ENCODE measurements at regions of chr3 and their contacts with region 1.

Region 1: GRCh38 chr3:45140141-45140784 is 5.9 kb downstream of the CDCP1 start:
- DNase-seq: no peak
- ATAC-seq: no peak
- H3K4me3 ChIP-seq: no peak overlapping the region
- H3K27ac ChIP-seq: peak overlapping the region; percentile 81; the same call in 2 of the 3 replicates
- H3K4me1 ChIP-seq: peaks cover 22 to 67% of the 10 kb centered on the region in 2 experiments
- H3K27me3 ChIP-seq: no peaks in the 10 kb centered on the region
- CTCF ChIP-seq: no peak
- EP300 ChIP-seq: no peak
- POLR2A ChIP-seq: no peak
- RAD21 ChIP-seq: no peak

Region 2: DNA sequence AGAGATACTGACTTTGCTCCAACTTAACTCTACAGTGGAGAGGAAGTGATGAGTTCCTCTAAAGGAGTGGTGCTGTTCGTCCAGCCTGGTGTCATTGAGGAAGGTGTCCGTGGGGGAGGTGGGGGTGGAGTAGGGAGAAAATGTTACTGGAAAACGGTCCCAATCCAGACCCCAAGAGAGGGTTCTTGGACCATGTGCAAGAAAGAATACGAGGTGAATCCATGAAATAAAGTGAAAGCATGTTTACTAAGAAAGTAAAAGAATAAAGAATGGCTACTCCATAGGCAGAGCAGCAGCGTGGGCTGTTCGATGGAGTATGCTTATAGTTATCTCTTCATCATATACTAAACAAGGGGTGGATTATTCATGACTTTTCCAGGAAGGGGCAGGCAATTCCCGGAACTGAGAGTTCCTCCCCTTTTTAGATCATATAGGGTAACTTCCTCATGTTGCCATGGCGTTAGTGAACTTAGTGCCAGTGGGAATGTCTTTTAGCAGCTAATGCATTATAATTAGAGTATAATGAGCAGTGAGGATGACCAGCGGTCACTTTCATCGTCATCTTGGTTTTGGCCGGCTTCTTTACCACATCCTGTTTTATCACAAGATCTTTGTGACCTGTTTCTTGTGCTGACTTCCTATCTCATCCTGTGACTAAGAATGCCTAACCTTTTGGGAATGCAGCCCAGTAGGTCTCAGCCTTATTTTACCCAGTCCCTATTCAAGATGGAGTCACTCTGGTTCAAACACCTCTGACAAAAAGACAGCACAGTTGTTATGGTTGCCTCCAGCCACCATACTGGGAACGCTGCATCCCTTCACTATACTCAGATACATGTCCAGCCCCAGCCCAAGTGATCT is 75.5 kb before region 1 on chr3:
- CTCF ChIA-PET with region 1: no interaction called
- POLR2A ChIA-PET with region 1: interaction called, 3 read pairs
- in situ Hi-C with region 1: no loop called
- intact Hi-C with region 1: loop called (anchors 2 kb)
- DNase-seq: peak; percentile 58 to 99 (median 70)
- ATAC-seq: peak; percentile 73
- H3K4me3 ChIP-seq: peak overlapping the region; percentile 12; the same call in 1 of the 2 replicates
- H3K27ac ChIP-seq: peak overlapping the region; percentile 94
- H3K4me1 ChIP-seq: peaks cover 25 to 68% of the 10 kb centered on the region in 2 experiments
- H3K27me3 ChIP-seq: no peaks in the 10 kb centered on the region
- CTCF ChIP-seq: no peak
- EP300 ChIP-seq: peak; percentile 85
- POLR2A ChIP-seq: peak; percentile 92
- RAD21 ChIP-seq: peak; percentile 9 to 92; a peak in 3 of 4 replicates

Region 3: DNA sequence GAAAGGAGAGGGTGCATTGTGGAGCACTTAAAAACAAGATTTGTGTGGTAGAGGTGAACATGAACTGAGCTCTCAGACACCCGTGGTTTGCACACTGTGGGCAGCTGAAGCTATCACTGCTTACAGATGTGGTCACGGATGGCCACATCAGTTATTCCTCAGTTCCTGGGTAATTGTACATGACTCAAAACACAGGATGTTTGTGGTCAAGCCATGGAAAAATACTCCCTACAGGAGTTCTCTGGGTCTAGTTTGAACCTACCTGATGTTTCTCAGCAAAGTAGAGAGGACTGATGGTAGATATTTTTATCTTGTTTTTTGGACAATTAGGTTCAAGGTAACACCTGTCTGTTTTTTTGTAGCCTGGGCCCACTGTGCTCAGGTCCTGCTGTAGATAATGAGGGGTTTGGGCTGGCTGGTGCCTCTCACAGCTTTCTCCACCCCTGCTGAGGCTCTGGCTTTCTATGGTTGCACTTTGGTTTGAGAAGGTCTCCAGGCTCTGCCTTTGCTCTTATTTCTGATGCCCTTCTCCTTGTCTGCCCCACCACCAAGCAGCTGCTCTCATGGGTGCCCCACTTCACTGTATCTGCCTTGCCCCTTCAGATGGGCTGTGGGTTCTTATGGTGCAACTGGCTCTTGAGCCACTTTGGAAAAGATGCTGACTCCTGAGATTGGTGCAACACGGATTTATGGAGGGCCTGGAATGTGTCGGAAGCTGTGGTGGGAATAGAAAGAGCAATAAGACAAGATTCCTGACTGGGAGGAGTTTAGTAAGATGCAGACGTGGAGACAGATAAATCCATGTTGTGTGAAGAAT is 34.2 kb before region 1 on chr3:
- CTCF ChIA-PET with region 1: no interaction called
- POLR2A ChIA-PET with region 1: interaction called, 3 read pairs
- in situ Hi-C with region 1: no loop called
- intact Hi-C with region 1: loop called (anchors 2 kb)
- DNase-seq: peak; percentile 52 to 75 (median 60)
- ATAC-seq: peak; percentile 55
- H3K4me3 ChIP-seq: no peak overlapping the region
- H3K27ac ChIP-seq: peak overlapping the region; percentile 84
- H3K4me1 ChIP-seq: peaks cover 30 to 78% of the 10 kb centered on the region in 2 experiments
- H3K27me3 ChIP-seq: no peaks in the 10 kb centered on the region
- CTCF ChIP-seq: no peak
- EP300 ChIP-seq: peak; percentile 79
- POLR2A ChIP-seq: no peak
- RAD21 ChIP-seq: peak; percentile 27 to 33; a peak in 2 of 4 replicates

Region 4: DNA sequence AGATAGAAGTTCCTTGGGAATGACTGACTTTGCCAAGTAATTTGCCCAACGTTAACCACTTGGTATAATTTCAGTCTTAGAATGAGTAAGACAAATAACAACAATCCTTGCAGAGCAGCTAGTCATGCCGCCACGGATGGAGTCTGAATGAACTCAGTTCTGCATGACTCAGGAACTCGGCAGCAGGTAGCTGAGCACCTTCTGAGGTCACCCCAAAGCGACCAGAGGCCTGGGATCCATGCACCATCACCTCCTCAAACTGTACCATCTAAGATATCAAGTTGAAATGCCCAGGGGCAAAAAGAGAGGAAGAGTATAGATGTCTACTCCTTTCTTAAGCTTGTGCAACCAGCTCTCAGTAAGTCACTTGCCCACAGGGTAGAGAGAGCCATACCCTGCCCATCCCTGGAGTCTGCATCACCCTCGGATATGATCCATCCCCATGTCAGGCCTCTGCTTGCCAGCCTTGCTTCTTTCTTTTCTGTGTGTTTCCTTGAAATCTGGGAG is 14.4 kb after region 1 on chr3:
- CTCF ChIA-PET with region 1: no interaction called
- POLR2A ChIA-PET with region 1: interaction called, 28 read pairs
- in situ Hi-C with region 1: no loop called
- intact Hi-C with region 1: no loop called
- DNase-seq: no peak
- ATAC-seq: peak; percentile 58
- H3K4me3 ChIP-seq: no peak overlapping the region
- H3K27ac ChIP-seq: no peak overlapping the region
- H3K4me1 ChIP-seq: peaks cover 0 to 18% of the 10 kb centered on the region in 2 experiments; a peak in 3 of 5 replicates
- H3K27me3 ChIP-seq: no peaks in the 10 kb centered on the region
- CTCF ChIP-seq: no peak
- EP300 ChIP-seq: no peak
- POLR2A ChIP-seq: no peak
- RAD21 ChIP-seq: no peak

Region 5: GRCh38 chr3:45210308-45211041 is 70.2 kb after region 1 on chr3:
- CTCF ChIA-PET with region 1: no interaction called
- POLR2A ChIA-PET with region 1: no interaction called
- in situ Hi-C with region 1: no loop called
- intact Hi-C with region 1: loop called (anchors 1 kb)
- DNase-seq: peak; percentile 81 to 88 (median 84)
- ATAC-seq: peak; percentile 99
- H3K4me3 ChIP-seq: no peak overlapping the region
- H3K27ac ChIP-seq: no peak overlapping the region
- H3K4me1 ChIP-seq: peaks cover 4 to 11% of the 10 kb centered on the region in 2 experiments; a peak in 3 of 5 replicates
- H3K27me3 ChIP-seq: no peaks in the 10 kb centered on the region
- CTCF ChIP-seq: peak; percentile 96 to 97 (median 96)
- EP300 ChIP-seq: peak; percentile 26; the same call in 1 of the 2 replicates
- POLR2A ChIP-seq: no peak
- RAD21 ChIP-seq: peak; percentile 96 to 98

Measured in K562 (cell line).